GM10248 (cell line): ENCODE measurements at regions of chr19 and their contacts with region 1.

Region 1: DNA sequence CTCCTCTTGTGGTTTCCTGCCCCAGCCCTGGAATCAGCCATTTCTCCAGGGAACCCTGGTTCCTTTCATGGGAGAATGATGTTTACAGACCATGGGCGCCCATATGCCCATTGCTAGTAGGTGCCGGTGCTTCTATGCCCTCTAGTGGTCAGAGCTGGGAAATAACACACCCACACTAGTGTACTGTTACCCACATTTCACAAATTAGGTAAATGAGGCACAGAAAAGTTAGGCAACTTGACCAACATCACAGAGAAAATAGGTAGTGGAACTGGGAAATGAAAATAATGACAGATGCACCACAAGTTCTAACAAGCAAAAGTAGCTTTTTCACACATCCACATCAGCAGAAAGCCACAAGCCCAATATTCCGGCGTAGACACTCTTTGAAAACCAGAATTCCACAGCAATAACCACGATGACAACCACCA is 1.3 kb upstream of the CEACAM3 start:
- DNase-seq: peak; percentile 27
- CTCF ChIP-seq: peak; percentile 58

Region 2: DNA sequence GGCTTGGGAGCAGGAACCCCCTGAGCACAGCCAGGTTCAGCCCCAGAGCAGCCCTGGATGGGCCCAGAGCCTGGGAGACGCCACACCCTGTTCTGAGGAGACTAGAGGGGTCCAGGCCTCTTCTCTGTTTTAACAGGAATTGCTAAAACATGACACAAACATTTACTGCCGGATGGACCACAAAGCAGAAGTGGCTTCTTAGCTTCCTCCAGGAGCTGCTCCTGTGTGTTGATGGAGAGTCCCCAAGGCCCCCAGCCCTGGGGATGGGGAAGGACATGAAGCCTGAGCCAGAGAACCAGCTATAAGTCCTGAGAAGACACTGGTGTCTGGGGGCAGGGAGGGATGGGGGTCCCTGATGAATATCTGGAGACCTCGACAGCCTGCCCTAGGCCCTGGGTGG is 16.0 kb after region 1 on chr19:
- CTCF ChIA-PET with region 1: interaction called, 44 read pairs
- POLR2A ChIA-PET with region 1: no interaction called
- DNase-seq: peak; percentile 25
- CTCF ChIP-seq: no peak

Region 3: GRCh38 chr19:41821003-41821735 is 26.1 kb after region 1 on chr19:
- CTCF ChIA-PET with region 1: interaction called, 153 read pairs
- POLR2A ChIA-PET with region 1: no interaction called
- DNase-seq: peak; percentile 83
- CTCF ChIP-seq: peak; percentile 59

Region 4: DNA sequence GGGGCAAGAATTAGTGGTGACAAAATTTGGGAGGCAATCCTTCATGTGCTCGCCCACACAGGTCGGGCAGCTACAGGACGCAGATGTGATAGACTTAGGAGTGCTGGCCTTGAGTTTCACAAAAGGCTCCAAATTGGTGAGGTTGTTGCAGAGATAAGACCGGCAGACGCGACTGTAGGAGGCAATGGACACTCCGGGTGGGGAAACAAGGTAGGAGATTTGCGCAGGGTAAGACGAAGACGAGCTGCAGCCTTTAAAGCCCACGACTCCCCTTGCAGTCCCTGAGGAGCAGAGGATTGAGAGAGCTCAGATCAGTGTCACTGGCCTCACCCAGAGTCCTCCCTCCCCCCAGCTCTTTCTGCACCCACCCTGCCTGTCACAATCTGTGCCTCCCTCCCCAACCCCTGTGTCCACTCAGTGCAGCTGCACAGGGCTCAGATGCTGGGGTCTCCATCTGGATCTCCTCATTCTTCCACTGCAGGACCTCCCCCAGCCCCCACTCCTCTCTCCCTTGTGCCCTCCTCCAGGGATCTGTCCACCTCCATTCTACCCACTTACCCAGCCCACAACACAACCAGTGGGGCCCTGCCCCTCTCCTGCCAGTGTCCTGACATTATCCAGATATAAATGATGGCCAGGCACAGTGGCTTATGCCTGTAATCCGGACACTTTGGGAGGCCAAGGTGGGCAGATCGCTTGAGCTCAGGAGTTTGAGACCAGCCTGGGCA is 43.1 kb after region 1 on chr19:
- CTCF ChIA-PET with region 1: interaction called, 51 read pairs
- POLR2A ChIA-PET with region 1: no interaction called
- DNase-seq: no peak
- CTCF ChIP-seq: no peak